Activated CD8-positive, alpha-beta T cell treated with anti-CD3 and anti-CD28 coated beads, Interleukin-2, amount 10 ng/mL, durations not matched to agents 7 days and 5 days (primary cell): ENCODE measurements at regions of chr10 and their contacts with region 1.

Region 1: GRCh38 chr10:97869091-97870042 is 19.7 kb downstream of the GOLGA7B start:
- DNase-seq: peak; percentile 95
- ATAC-seq: peak; percentile 99
- H3K4me3 Mint-ChIP-seq: peak overlapping the region; percentile 40
- H3K27ac Mint-ChIP-seq: peak overlapping the region; percentile 78
- H3K4me1 Mint-ChIP-seq: peaks cover 17% of the 10 kb centered on the region
- H3K27me3 Mint-ChIP-seq: peaks cover 11% of the 10 kb centered on the region

Region 2: DNA sequence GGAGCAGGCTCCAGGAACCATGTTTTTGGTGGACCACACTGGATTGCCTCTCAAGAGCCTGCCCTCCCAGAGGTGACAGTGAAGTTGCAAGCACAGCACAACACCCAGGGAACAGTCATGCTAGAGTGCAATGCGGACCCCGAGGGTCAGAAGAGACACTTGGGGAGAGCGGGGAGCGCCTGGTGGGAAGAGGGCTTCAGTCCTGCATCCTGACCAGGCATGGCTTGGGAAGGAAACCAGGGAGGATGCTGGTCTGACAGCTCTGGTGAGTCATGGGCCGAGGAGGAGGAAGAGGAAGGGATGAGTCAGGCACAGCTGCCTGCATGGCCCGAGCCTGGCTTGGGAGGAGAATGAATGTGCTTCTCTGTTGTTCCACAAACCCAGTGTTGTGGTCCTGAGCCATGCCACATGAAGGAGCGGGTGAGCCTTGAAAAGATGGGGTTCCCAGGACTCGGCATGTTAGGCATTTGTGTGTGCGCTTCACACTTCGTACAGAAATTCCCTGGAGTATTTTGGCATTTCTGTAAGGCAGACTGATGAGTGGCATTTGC is 326.3 kb before region 1 on chr10:
- CTCF ChIA-PET with region 1: no interaction called
- POLR2A ChIA-PET with region 1: no interaction called
- DNase-seq: peak; percentile 46
- ATAC-seq: peak; percentile 65
- H3K4me3 Mint-ChIP-seq: no peak overlapping the region
- H3K27ac Mint-ChIP-seq: no peak overlapping the region
- H3K4me1 Mint-ChIP-seq: peaks cover 13% of the 10 kb centered on the region
- H3K27me3 Mint-ChIP-seq: no peaks in the 10 kb centered on the region

Region 3: GRCh38 chr10:97553575-97554031 is 315.8 kb before region 1 on chr10:
- CTCF ChIA-PET with region 1: no interaction called
- POLR2A ChIA-PET with region 1: no interaction called
- DNase-seq: peak; percentile 65
- ATAC-seq: peak; percentile 98
- H3K4me3 Mint-ChIP-seq: no peak overlapping the region
- H3K27ac Mint-ChIP-seq: no peak overlapping the region
- H3K4me1 Mint-ChIP-seq: no peaks in the 10 kb centered on the region
- H3K27me3 Mint-ChIP-seq: peaks cover 4% of the 10 kb centered on the region

Region 4: GRCh38 chr10:97759158-97759887 is 110.0 kb before region 1 on chr10:
- CTCF ChIA-PET with region 1: interaction called, 38 read pairs
- POLR2A ChIA-PET with region 1: interaction called, 3 read pairs
- DNase-seq: peak; percentile 68
- ATAC-seq: peak; percentile 82
- H3K4me3 Mint-ChIP-seq: no peak overlapping the region
- H3K27ac Mint-ChIP-seq: no peak overlapping the region
- H3K4me1 Mint-ChIP-seq: peaks cover under 1% of the 10 kb centered on the region
- H3K27me3 Mint-ChIP-seq: no peaks in the 10 kb centered on the region

Region 5: GRCh38 chr10:97780841-97781617 is 88.3 kb before region 1 on chr10:
- CTCF ChIA-PET with region 1: interaction called, 20 read pairs
- POLR2A ChIA-PET with region 1: no interaction called
- DNase-seq: no peak
- ATAC-seq: peak; percentile 25
- H3K4me3 Mint-ChIP-seq: peak overlapping the region; percentile 58
- H3K27ac Mint-ChIP-seq: peak overlapping the region; percentile 96
- H3K4me1 Mint-ChIP-seq: peaks cover 33% of the 10 kb centered on the region
- H3K27me3 Mint-ChIP-seq: no peaks in the 10 kb centered on the region

Region 6: GRCh38 chr10:97792141-97792721 is 77.1 kb before region 1 on chr10:
- CTCF ChIA-PET with region 1: interaction called, 222 read pairs
- POLR2A ChIA-PET with region 1: no interaction called
- DNase-seq: peak; percentile 81
- ATAC-seq: peak; percentile 64
- H3K4me3 Mint-ChIP-seq: no peak overlapping the region
- H3K27ac Mint-ChIP-seq: peak overlapping the region; percentile 53
- H3K4me1 Mint-ChIP-seq: peaks cover 41% of the 10 kb centered on the region
- H3K27me3 Mint-ChIP-seq: peaks cover 2% of the 10 kb centered on the region

Region 7: GRCh38 chr10:97849687-97850402 is 19.5 kb before region 1 on chr10 and contains the start of gene GOLGA7B:
- CTCF ChIA-PET with region 1: interaction called, 45 read pairs
- POLR2A ChIA-PET with region 1: no interaction called
- DNase-seq: peak; percentile 80
- ATAC-seq: peak; percentile 85
- H3K4me3 Mint-ChIP-seq: peak within 1 kb of the TSS; percentile 84
- H3K27ac Mint-ChIP-seq: peak within 1 kb of the TSS; percentile 83
- H3K4me1 Mint-ChIP-seq: peaks cover 37% of the 10 kb centered on the region
- H3K27me3 Mint-ChIP-seq: no peaks in the 10 kb centered on the region
- total RNA-seq, gene GOLGA7B: 10.4 to 11.0 TPM

Region 8: GRCh38 chr10:97898429-97898828 is 29.1 kb after region 1 on chr10:
- CTCF ChIA-PET with region 1: no interaction called
- POLR2A ChIA-PET with region 1: no interaction called
- DNase-seq: no peak
- ATAC-seq: no peak
- H3K4me3 Mint-ChIP-seq: no peak overlapping the region
- H3K27ac Mint-ChIP-seq: no peak overlapping the region
- H3K4me1 Mint-ChIP-seq: no peaks in the 10 kb centered on the region
- H3K27me3 Mint-ChIP-seq: peaks cover 8% of the 10 kb centered on the region